ENCODE measurements at regions of chr18 and their contacts with region 1.

Region 1: GRCh38 chr18:38256366-38256765 is 690.8 kb upstream of the CELF4 start:
- DNase-seq: no peak
- ATAC-seq: no peak
- H3K4me3 ChIP-seq: no peak overlapping the region
- H3K27ac ChIP-seq: no peak overlapping the region
- H3K4me1 ChIP-seq: no peaks in the 10 kb centered on the region
- H3K27me3 ChIP-seq: no peaks in the 10 kb centered on the region
- CTCF ChIP-seq: no peak
- POLR2A ChIP-seq: no peak

Region 2: GRCh38 chr18:38198956-38199355 is 57.4 kb before region 1 on chr18:
- intact Hi-C with region 1: loop called in 1 of 2 experiments (anchors 10 kb)
- DNase-seq: no peak
- ATAC-seq: no peak
- H3K4me3 ChIP-seq: no peak overlapping the region
- H3K27ac ChIP-seq: no peak overlapping the region
- H3K4me1 ChIP-seq: no peaks in the 10 kb centered on the region
- H3K27me3 ChIP-seq: no peaks in the 10 kb centered on the region
- CTCF ChIP-seq: no peak
- POLR2A ChIP-seq: no peak

Region 3: DNA sequence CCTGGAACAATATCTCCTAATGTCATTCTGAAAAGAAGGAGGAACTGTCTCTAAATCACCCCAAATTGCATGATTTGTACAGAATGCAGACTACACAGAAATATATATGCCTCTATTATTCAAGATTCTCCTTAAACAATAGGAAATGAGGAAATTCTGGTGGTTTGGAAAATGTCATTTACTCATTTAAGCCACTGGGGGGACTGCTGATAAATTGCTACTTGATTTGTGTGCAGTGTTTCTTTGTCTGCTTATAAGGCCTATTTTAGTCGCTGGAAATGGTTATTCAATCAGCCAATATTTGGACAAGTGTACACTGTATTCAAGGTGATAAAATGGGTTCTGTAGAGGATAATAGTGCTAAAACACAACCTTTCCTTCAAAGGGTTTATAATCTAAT is 111.1 kb after region 1 on chr18:
- intact Hi-C with region 1: no loop called
- DNase-seq: no peak
- ATAC-seq: no peak
- H3K4me3 ChIP-seq: no peak overlapping the region
- H3K27ac ChIP-seq: no peak overlapping the region
- H3K4me1 ChIP-seq: no peaks in the 10 kb centered on the region
- H3K27me3 ChIP-seq: no peaks in the 10 kb centered on the region
- CTCF ChIP-seq: no peak
- POLR2A ChIP-seq: no peak